MCF 10A (cell line): ENCODE measurements at regions of chr15 and their contacts with region 1.

Region 1: GRCh38 chr15:62742409-62743171 is 300.0 kb upstream of the TPM1 start:
- DNase-seq: peak; percentile 82
- H3K4me3 Mint-ChIP-seq: no peak overlapping the region
- H3K27ac Mint-ChIP-seq: peak overlapping the region; percentile 65
- H3K4me1 Mint-ChIP-seq: peaks cover 42% of the 10 kb centered on the region
- H3K27me3 Mint-ChIP-seq: no peaks in the 10 kb centered on the region
- CTCF ChIP-seq: peak; percentile 64

Region 2: GRCh38 chr15:62549345-62549970 is 193.1 kb before region 1 on chr15:
- CTCF ChIA-PET with region 1: interaction called, 3 read pairs
- POLR2A ChIA-PET with region 1: no interaction called
- intact Hi-C with region 1: loop called (anchors 5 kb)
- DNase-seq: peak; percentile 59
- H3K4me3 Mint-ChIP-seq: no peak overlapping the region
- H3K27ac Mint-ChIP-seq: no peak overlapping the region
- H3K4me1 Mint-ChIP-seq: peaks cover 13% of the 10 kb centered on the region
- H3K27me3 Mint-ChIP-seq: no peaks in the 10 kb centered on the region
- CTCF ChIP-seq: peak; percentile 54

Region 3: GRCh38 chr15:62606376-62607113 is 136.0 kb before region 1 on chr15:
- CTCF ChIA-PET with region 1: interaction called, 11 read pairs
- POLR2A ChIA-PET with region 1: interaction called, 9 read pairs
- intact Hi-C with region 1: no loop called
- DNase-seq: peak; percentile 83
- H3K4me3 Mint-ChIP-seq: no peak overlapping the region
- H3K27ac Mint-ChIP-seq: no peak overlapping the region
- H3K4me1 Mint-ChIP-seq: peaks cover 48% of the 10 kb centered on the region
- H3K27me3 Mint-ChIP-seq: no peaks in the 10 kb centered on the region
- CTCF ChIP-seq: no peak

Region 4: DNA sequence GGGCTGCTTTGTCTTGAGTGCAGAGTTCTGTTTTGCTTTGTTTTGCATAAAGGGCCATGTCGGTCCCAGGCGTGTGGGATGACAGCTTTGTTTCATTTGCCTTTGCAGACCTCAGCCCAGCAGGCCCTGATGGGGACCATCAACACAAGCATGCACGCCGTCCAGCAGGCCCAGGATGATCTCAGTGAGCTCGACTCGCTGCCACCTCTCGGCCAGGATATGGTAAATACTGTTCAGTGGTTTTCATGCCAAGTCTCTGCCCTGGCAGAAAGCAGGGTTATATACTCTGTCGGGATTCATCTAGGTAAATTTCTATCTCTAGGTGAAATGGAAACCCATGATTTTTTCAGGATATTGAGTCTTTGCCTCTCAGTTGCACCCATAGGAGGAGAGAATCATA is 43.9 kb before region 1 on chr15:
- CTCF ChIA-PET with region 1: interaction called, 10 read pairs
- POLR2A ChIA-PET with region 1: interaction called, 3 read pairs
- intact Hi-C with region 1: no loop called
- DNase-seq: no peak
- H3K4me3 Mint-ChIP-seq: no peak overlapping the region
- H3K27ac Mint-ChIP-seq: no peak overlapping the region
- H3K4me1 Mint-ChIP-seq: no peaks in the 10 kb centered on the region
- H3K27me3 Mint-ChIP-seq: no peaks in the 10 kb centered on the region
- CTCF ChIP-seq: no peak

Region 5: GRCh38 chr15:62732078-62732477 is 10.5 kb before region 1 on chr15:
- CTCF ChIA-PET with region 1: interaction called, 23 read pairs
- POLR2A ChIA-PET with region 1: interaction called, 9 read pairs
- intact Hi-C with region 1: no loop called
- DNase-seq: peak; percentile 36
- H3K4me3 Mint-ChIP-seq: no peak overlapping the region
- H3K27ac Mint-ChIP-seq: no peak overlapping the region
- H3K4me1 Mint-ChIP-seq: peaks cover 9% of the 10 kb centered on the region
- H3K27me3 Mint-ChIP-seq: no peaks in the 10 kb centered on the region
- CTCF ChIP-seq: no peak

Region 6: DNA sequence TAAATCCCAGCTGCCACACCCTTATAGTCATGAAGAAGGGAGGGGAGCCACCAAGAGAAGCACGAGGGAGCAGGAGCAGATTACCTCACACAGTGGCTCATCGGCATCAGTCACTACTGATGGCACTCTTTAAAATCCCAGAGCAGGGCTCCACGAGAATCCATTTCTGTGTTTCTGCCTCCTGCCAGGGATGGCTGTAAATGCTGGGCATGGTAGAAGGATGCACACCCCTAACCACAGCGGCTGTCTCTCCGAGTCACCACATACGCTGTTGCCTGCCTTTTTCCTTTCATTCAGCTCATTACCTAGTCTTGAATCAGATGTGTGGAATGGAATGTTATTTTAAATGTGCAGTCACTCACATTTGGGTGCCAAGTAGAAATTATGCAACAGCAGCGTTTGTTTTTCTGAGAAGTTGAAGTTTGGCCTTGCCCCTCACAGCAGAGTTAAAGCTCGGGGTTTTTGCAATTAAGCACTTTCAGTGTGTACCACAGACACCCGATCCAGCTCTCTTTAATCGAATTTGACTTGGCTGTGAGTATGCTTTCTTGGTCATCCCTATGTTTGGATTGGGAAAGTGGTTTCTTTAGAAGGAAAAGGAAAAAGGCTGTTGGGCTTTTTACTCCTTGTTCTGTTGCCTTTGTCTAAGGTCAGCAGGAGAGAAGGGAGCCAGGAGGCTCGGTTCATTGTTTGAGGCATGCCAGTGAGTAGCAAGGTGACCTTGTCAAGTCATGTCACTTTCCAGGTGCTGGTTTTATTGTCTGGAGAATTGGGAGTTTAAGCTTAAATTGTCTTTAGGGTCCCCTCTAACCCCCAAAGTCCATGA is 15.7 kb after region 1 on chr15:
- CTCF ChIA-PET with region 1: interaction called, 9 read pairs
- POLR2A ChIA-PET with region 1: interaction called, 13 read pairs
- intact Hi-C with region 1: loop called (anchors 1 kb)
- DNase-seq: peak; percentile 86
- H3K4me3 Mint-ChIP-seq: peak overlapping the region; percentile 47
- H3K27ac Mint-ChIP-seq: peak overlapping the region; percentile 74
- H3K4me1 Mint-ChIP-seq: peaks cover 30% of the 10 kb centered on the region
- H3K27me3 Mint-ChIP-seq: no peaks in the 10 kb centered on the region
- CTCF ChIP-seq: no peak